GM18951 (cell line): ENCODE measurements at regions of chr5 and their contacts with region 1.

Region 1: DNA sequence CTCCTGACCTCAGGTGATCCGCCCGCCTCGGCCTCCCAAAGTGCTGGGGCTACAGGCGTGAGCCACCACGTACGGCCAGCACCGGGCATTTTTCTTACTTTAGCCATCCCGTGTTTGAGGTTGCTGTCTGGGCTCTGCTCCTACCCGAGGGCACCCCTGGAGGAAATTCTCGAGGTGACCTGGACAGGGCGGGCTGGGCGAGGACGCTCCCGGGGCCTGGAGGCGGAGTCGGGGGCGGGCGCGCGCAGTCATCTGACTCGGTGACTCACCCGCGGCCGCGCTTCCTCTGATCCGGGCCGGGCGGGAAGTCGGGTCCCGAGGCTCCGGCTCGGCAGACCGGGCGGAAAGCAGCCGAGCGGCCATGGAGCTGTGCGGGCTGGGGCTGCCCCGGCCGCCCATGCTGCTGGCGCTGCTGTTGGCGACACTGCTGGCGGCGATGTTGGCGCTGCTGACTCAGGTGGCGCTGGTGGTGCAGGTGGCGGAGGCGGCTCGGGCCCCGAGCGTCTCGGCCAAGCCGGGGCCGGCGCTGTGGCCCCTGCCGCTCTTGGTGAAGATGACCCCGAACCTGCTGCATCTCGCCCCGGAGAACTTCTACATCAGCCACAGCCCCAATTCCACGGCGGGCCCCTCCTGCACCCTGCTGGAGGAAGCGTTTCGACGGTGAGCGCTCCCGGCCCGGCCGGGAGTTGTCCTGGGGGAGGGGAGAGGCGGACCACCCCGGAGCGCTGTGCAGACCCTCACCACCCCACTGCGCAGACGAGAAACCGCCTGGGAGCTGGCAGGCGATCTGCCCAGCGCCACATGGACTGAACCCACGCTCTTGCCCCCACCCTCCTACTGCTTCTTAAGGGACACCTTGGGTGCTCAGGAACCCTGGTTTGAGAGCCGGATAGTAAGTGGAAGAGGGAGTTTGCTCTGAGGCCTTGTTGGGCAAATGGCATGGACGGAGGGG is at the start of gene HEXB:
- POLR2A ChIP-seq: peak; percentile 90

Region 2: DNA sequence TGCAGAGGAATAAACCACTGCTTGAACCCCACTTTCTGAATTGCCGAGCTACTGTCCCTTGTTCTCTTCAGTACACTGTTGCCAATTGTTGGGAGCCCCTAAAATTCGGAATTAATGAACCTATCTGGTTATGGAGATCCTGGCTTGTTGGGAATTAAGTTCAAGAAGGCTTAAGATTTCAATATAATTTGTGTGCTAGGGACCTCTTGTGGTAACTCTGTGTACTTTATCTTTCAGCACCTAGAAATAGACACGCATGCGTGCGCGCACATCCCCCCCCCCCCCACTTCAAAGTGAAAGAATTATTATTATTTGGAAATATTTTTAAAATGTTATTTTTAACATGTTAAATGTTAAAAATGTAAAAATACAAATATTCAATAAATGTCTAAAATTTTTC is 234.3 kb after region 1 on chr5:
- in situ Hi-C with region 1: loop called (anchors 10 kb)
- POLR2A ChIP-seq: no peak

Region 3: GRCh38 chr5:75142566-75143136 is 457.5 kb after region 1 on chr5:
- in situ Hi-C with region 1: no loop called
- POLR2A ChIP-seq: no peak